Heart left ventricle (tissue), 16 donors: ENCODE measurements at regions of chr5 and their contacts with region 1.

Region 1: GRCh38 chr5:52893105-52893504 is 96.0 kb upstream of the ITGA2 start:
- DNase-seq: no peak
- ATAC-seq: peak; percentile 38 to 68 (median 58)
- H3K4me3 ChIP-seq: no peak overlapping the region
- H3K27ac ChIP-seq: peak overlapping the region in 5 of 12 donors; percentile 8 to 73 (median 50)
- H3K4me1 ChIP-seq: peaks cover 3 to 51% (median 28%) of the 10 kb centered on the region in 12 donors
- H3K27me3 ChIP-seq: no peaks in the 10 kb centered on the region
- CTCF ChIP-seq: no peak
- POLR2A ChIP-seq: no peak

Region 2: GRCh38 chr5:52809884-52810283 is 83.2 kb before region 1 on chr5:
- intact Hi-C with region 1: loop called in 1 of 10 experiments (anchors 5 kb)
- DNase-seq: no peak
- ATAC-seq: peak in 2 of 4 donors; percentile 15 to 33
- H3K4me3 ChIP-seq: no peak overlapping the region
- H3K27ac ChIP-seq: peak overlapping the region in 6 of 12 donors; percentile 7 to 72 (median 22)
- H3K4me1 ChIP-seq: peaks cover 0 to 80% (median 50%) of the 10 kb centered on the region in 12 donors
- H3K27me3 ChIP-seq: no peaks in the 10 kb centered on the region
- CTCF ChIP-seq: no peak
- POLR2A ChIP-seq: no peak

Region 3: GRCh38 chr5:52943285-52943684 is 50.2 kb after region 1 on chr5:
- intact Hi-C with region 1: loop called in 1 of 10 experiments (anchors 5 kb)
- DNase-seq: no peak
- ATAC-seq: peak in 1 of 4 donors; percentile 12
- H3K4me3 ChIP-seq: no peak overlapping the region
- H3K27ac ChIP-seq: peak overlapping the region in 1 of 12 donors; percentile 50
- H3K4me1 ChIP-seq: peaks cover 0 to 19% (median 5%) of the 10 kb centered on the region in 12 donors
- H3K27me3 ChIP-seq: no peaks in the 10 kb centered on the region
- CTCF ChIP-seq: no peak
- POLR2A ChIP-seq: no peak